MCF 10A (cell line): ENCODE measurements at regions of chr1 and their contacts with region 1.

Region 1: DNA sequence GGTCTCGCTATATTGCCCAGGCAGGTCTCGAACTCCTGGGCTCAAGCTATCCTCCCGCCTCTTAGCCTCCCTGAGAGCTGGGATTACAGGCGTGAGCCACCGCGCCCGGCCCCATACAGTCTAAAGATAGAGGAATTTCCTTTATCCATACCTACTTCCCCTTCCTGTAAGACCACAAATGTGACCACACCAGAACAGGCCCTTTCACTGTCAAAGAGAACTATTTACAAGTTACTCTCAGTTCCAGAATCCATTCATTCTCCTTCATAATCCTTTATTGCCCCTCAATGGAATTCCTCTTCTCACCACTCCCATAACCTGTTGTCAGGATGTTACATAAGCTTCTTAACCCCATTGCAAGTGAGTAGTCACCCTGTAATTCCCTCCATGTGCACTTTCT is 26.3 kb upstream of the SLC5A9 start:
- DNase-seq: no peak
- H3K4me3 Mint-ChIP-seq: no peak overlapping the region
- H3K27ac Mint-ChIP-seq: no peak overlapping the region
- H3K4me1 Mint-ChIP-seq: peaks cover 47% of the 10 kb centered on the region
- H3K27me3 Mint-ChIP-seq: no peaks in the 10 kb centered on the region
- CTCF ChIP-seq: no peak

Region 2: GRCh38 chr1:48182441-48182840 is 13.8 kb before region 1 on chr1:
- CTCF ChIA-PET with region 1: interaction called, 36 read pairs
- POLR2A ChIA-PET with region 1: interaction called, 26 read pairs
- intact Hi-C with region 1: no loop called
- DNase-seq: peak; percentile 67
- H3K4me3 Mint-ChIP-seq: peak overlapping the region; percentile 66
- H3K27ac Mint-ChIP-seq: peak overlapping the region; percentile 88
- H3K4me1 Mint-ChIP-seq: peaks cover 48% of the 10 kb centered on the region
- H3K27me3 Mint-ChIP-seq: no peaks in the 10 kb centered on the region
- CTCF ChIP-seq: no peak